T-cell (primary cell): ENCODE measurements at regions of chr1 and their contacts with region 1.

Region 1: DNA sequence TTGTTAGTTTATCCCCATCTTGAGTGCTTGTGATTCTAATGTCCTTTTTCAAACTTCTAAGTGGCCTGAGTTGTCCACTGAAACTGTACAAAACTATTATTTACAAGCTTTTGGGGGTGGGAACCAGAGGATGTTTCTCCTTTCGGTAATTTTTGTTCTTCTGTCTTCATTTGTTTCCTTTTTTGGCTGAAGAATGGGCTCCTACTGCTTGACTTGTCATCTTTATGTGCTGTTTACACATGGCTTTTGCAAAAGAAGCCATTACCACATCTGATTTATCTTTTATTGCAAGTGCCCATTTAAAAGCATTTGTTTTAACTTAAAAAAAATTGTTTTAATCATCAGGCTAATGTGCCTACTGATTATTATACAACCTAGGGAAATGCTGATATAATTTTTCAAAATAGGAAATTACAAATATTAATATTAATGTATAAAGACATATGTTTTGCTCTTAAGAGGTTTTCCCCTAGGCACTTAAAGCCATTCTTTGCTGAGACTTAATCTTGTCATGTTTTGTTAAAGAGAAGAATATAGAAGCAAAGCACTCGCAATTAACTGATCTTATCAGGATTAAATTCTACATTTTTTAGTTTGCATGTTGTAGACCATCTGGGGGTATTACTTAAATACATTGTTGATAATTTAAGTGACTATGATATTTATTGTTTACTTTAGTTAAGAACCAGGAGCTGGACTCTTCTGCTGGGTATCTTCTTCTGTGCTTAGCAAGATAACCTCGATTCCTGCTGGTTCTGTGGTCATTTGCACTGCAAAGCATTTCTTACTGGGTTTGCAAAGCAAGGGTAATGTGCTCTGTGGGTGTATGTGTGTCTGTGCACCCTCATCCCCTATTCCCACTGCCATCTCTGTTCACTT is 40.1 kb downstream of the TMEM200B start:
- DNase-seq: no peak
- ATAC-seq: no peak
- H3K4me3 ChIP-seq: no peak overlapping the region
- H3K4me3 Mint-ChIP-seq: no peak overlapping the region
- H3K27ac ChIP-seq: no peak overlapping the region
- H3K27ac Mint-ChIP-seq: no peak overlapping the region
- H3K4me1 ChIP-seq: no peaks in the 10 kb centered on the region
- H3K4me1 Mint-ChIP-seq: no peaks in the 10 kb centered on the region
- H3K27me3 ChIP-seq: no peaks in the 10 kb centered on the region
- H3K27me3 Mint-ChIP-seq: no peaks in the 10 kb centered on the region

Region 2: GRCh38 chr1:28394136-28394535 is 689.4 kb before region 1 on chr1:
- CTCF ChIA-PET with region 1: no interaction called
- POLR2A ChIA-PET with region 1: interaction called in 1 of 2 experiments, 13 read pairs
- DNase-seq: no peak
- ATAC-seq: no peak
- H3K4me3 ChIP-seq: no peak overlapping the region
- H3K4me3 Mint-ChIP-seq: no peak overlapping the region
- H3K27ac ChIP-seq: no peak overlapping the region
- H3K27ac Mint-ChIP-seq: no peak overlapping the region
- H3K4me1 ChIP-seq: no peaks in the 10 kb centered on the region
- H3K4me1 Mint-ChIP-seq: peaks cover 0 to 8% (median 4%) of the 10 kb centered on the region in 3 donors
- H3K27me3 ChIP-seq: no peaks in the 10 kb centered on the region
- H3K27me3 Mint-ChIP-seq: no peaks in the 10 kb centered on the region

Region 3: DNA sequence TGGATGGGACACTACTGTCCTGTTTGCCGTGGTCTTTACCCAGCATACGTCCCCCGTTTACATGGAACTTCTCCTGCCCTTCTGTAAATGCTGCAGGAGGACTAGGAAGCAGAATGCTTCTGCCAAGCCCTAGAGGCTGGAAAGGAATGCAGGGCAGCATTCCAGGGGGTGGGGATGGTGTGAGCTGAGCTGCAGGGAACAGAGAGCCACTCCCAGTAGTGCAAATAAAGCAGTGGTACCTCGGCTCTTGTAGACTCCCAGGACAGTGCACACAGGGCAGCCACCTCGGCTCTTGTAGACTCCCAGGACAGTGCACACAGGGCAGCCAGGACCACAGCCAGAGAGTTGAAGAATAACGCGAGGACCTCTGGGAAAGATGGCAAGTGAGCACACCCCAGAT is 188.2 kb after region 1 on chr1:
- CTCF ChIA-PET with region 1: no interaction called
- POLR2A ChIA-PET with region 1: no interaction called
- DNase-seq: no peak
- ATAC-seq: no peak
- H3K4me3 ChIP-seq: no peak overlapping the region
- H3K4me3 Mint-ChIP-seq: no peak overlapping the region
- H3K27ac ChIP-seq: no peak overlapping the region
- H3K27ac Mint-ChIP-seq: no peak overlapping the region
- H3K4me1 ChIP-seq: no peaks in the 10 kb centered on the region
- H3K4me1 Mint-ChIP-seq: no peaks in the 10 kb centered on the region
- H3K27me3 ChIP-seq: peaks cover 2 to 37% of the 10 kb centered on the region in 2 experiments
- H3K27me3 Mint-ChIP-seq: peaks cover 52 to 61% of the 10 kb centered on the region in 2 donors